ENCODE measurements at regions of chr15 and their contacts with region 1.

Region 1: GRCh38 chr15:25933456-25934158 is 70.5 kb upstream of the ATP10A start:
- H3K4me3 ChIP-seq: no peak overlapping the region
- H3K27ac ChIP-seq: no peak overlapping the region
- H3K4me1 ChIP-seq: no peaks in the 10 kb centered on the region
- CTCF ChIP-seq: peak; percentile 50; the same call in 1 of the 2 replicates

Region 2: GRCh38 chr15:25710184-25710583 is 223.4 kb before region 1 on chr15:
- CTCF ChIA-PET with region 1: interaction called, 17 read pairs
- POLR2A ChIA-PET with region 1: no interaction called
- H3K4me3 ChIP-seq: no peak overlapping the region
- H3K27ac ChIP-seq: no peak overlapping the region
- H3K4me1 ChIP-seq: no peaks in the 10 kb centered on the region
- CTCF ChIP-seq: peak; percentile 51

Region 3: DNA sequence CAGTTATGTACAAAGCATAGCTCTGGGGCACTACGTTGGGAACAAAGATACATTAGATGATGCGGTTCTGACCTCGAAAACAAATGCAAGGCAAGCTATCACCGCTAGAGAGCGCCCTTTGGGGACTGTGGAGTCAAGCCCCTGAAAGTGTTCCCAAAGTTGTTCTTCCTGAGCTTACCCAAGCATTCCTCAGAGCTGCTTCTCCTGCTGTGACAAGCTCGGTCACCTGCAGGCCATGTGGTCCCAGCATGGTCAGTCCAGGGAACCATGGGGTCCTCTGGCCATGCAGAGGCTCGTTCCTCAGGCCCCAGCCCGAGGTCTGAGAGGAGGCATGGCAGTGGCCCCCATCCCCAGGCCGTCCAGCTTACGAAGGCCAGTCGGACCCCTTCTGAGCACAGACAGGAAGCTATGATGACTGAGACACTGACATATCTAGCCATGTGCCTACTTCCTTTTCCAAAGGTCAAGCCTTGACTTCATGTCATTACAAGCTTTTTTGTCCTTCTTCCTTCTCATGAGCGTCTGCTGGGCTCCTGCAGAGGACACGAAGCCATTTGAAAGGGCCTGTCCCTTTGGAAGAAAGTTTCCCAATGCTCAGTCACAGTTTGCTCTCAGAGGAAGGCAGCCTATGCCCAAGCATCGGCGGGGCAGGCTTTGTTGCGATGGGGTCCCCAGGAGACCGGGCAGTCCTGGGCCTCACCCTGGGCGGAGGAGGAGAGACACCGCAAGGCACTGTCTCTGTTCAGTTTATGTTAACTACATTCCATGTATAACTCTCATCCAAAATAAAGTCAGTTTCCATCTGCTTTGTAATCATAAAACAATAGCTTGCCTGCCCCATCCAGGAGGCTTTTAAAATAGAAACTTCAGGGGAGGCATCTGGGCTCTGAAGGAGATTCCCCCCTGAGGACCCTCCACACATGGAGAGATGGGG is 149.7 kb before region 1 on chr15:
- CTCF ChIA-PET with region 1: interaction called, 18 read pairs
- POLR2A ChIA-PET with region 1: no interaction called
- H3K4me3 ChIP-seq: no peak overlapping the region
- H3K27ac ChIP-seq: no peak overlapping the region
- H3K4me1 ChIP-seq: no peaks in the 10 kb centered on the region
- CTCF ChIP-seq: no peak

Region 4: GRCh38 chr15:25805031-25805430 is 128.6 kb before region 1 on chr15:
- CTCF ChIA-PET with region 1: no interaction called
- POLR2A ChIA-PET with region 1: no interaction called
- H3K4me3 ChIP-seq: no peak overlapping the region
- H3K27ac ChIP-seq: no peak overlapping the region
- H3K4me1 ChIP-seq: no peaks in the 10 kb centered on the region
- CTCF ChIP-seq: no peak

Region 5: DNA sequence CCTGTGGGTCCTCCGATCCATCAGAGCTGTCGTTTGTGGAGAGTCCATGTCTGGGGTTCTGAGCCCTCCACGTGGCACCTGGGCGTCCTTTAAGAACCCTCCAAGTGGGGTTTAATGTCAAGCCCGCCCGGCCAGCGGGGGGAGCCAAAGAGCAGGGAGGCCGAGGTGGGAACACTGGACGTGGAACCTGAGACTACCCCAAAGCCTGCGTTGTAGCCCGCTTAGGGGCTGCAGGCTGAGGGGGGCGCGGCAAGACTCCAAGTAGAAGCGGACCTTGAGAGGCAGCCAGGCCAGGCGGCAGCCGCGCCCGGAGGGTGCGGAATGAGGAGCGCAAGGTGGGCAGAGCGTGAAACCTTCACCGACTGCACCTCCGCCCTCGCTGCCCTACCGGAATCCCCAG is 55.7 kb after region 1 on chr15:
- CTCF ChIA-PET with region 1: no interaction called
- POLR2A ChIA-PET with region 1: no interaction called
- H3K4me3 ChIP-seq: no peak overlapping the region
- H3K27ac ChIP-seq: no peak overlapping the region
- H3K4me1 ChIP-seq: no peaks in the 10 kb centered on the region
- CTCF ChIP-seq: no peak

Region 6: DNA sequence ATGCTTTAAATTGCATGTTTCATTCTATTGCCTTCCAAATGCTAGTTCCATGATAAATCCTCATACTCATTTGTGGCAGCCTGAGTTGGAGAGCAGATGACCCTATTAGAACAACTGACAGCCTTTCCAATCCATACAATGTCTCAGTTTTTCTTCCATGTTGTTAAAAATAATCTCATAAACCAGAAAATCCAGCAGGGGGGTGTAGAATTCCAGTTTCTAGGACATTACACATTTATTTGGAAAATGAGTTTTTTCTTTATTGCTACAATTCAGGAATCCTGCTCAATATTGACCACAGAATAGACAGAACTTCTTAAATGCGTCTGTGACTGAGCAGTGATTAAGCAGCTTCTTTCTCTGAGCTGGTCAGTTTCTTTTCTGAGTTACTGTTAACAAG is 103.8 kb after region 1 on chr15:
- CTCF ChIA-PET with region 1: no interaction called
- POLR2A ChIA-PET with region 1: no interaction called
- H3K4me3 ChIP-seq: no peak overlapping the region
- H3K27ac ChIP-seq: no peak overlapping the region
- H3K4me1 ChIP-seq: no peaks in the 10 kb centered on the region
- CTCF ChIP-seq: no peak

Region 7: DNA sequence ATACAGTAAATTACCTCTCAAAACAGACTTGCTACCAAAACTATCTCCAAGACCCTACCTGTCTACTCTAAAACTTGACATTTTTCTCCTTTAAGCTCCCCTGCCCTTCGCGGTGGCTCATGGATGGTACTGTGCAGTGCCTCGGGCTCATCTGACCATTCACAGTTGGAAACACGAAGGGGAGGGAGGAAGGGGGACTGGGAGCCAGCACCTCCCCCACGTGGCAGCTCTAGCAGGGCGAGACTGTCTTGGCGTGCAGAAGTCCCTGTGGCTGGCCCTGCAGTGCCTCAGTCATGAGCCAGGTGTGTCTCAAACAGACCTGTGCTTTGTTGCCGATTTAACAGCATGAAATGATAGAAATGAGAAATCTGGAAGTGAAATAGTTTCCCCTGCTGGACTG is 1409.4 kb after region 1 on chr15:
- CTCF ChIA-PET with region 1: no interaction called
- POLR2A ChIA-PET with region 1: interaction called, 11 read pairs
- H3K4me3 ChIP-seq: no peak overlapping the region
- H3K27ac ChIP-seq: no peak overlapping the region
- H3K4me1 ChIP-seq: no peaks in the 10 kb centered on the region
- CTCF ChIP-seq: no peak